Activated CD4-positive, alpha-beta memory T cell treated with anti-CD3 and anti-CD28 coated beads for 36 hours (primary cell): ENCODE measurements at regions of chr22 and their contacts with region 1.

Region 1: GRCh38 chr22:37566903-37567820 is 6.9 kb downstream of the CDC42EP1 start:
- DNase-seq: peak; percentile 96
- H3K4me3 Mint-ChIP-seq: peak overlapping the region; percentile 35
- H3K27ac Mint-ChIP-seq: peak overlapping the region; percentile 81
- H3K4me1 Mint-ChIP-seq: peaks cover 27% of the 10 kb centered on the region
- H3K27me3 Mint-ChIP-seq: peaks cover 24% of the 10 kb centered on the region

Region 2: DNA sequence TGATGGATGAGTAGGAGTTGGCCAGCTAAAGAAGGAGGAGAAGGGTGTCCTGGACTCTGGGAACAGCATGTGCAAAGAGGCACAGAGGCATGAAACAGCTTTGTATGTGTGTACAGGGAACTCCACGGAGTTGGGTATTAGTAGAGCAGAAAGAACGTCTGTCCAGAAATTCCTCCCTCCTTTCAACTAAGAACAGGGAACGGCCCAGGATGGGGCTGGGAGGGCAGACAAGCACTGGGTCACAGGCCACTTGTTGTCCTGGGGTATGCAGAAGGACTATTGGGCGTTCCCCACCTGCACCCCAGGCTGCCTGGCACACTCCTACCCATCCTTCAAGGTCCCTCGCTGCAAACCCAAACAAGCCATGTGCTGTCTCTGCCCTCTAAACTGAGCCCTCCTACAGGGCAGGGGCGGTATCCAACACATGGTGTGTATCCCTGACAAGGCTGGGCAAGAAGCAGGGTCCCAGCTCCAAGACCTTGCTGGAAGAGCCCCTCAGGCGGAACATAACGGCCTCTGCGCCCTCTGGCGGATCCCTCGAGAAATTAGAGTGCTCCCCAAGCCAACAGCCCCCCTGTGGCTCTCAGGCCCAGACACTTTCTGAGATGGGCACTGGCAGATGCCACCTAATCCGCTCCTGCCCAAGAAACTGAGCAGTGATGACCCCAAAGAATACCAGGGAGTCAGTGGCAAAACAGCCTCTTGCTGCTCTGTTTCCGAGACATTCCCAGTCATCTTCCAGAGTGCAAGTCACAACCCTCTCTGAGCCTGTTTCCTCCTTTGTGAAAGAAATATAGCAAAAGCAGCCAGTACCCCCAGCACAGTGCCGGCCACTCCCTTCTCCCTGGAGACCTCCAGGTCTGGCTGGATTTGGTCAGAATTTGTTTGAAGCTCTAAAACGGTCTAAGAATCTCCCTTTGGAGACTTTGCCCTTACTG is 138.2 kb before region 1 on chr22:
- CTCF ChIA-PET with region 1: interaction called, 18 read pairs
- POLR2A ChIA-PET with region 1: no interaction called
- intact Hi-C with region 1: no loop called
- DNase-seq: peak; percentile 66
- H3K4me3 Mint-ChIP-seq: no peak overlapping the region
- H3K27ac Mint-ChIP-seq: no peak overlapping the region
- H3K4me1 Mint-ChIP-seq: peaks cover 27% of the 10 kb centered on the region
- H3K27me3 Mint-ChIP-seq: peaks cover 55% of the 10 kb centered on the region

Region 3: DNA sequence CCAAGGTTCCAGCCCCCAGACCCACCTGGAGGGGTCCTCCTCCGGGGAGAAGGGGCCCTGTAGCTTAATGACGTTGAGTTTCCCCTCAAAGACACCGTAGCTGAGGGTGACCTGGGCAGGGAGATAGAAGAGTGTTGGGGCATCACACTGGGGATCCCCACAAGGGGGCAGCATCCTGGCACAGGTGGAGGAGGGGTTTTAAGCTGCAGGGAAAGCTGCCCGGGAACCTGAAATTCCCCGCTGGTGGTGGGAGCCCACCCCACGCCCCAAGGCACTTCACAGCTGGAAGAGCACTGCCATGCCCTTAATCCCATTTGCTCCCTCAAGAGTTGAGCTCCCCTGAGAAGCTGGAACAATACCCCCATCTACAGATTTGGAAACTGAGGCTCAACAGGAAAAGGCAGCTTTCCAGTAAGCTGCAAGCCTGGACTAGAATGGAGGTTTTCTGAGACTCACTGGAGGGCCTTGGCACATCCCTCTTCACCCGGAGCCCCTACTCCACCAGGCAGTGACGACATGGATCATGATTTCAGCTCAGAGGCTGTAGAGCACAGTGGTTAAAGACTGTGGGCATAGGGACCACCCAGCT is 94.7 kb before region 1 on chr22:
- CTCF ChIA-PET with region 1: interaction called, 45 read pairs
- POLR2A ChIA-PET with region 1: no interaction called
- intact Hi-C with region 1: no loop called
- DNase-seq: peak; percentile 52
- H3K4me3 Mint-ChIP-seq: no peak overlapping the region
- H3K27ac Mint-ChIP-seq: peak overlapping the region; percentile 49
- H3K4me1 Mint-ChIP-seq: no peaks in the 10 kb centered on the region
- H3K27me3 Mint-ChIP-seq: no peaks in the 10 kb centered on the region

Region 4: GRCh38 chr22:37525073-37525748 is 42.0 kb before region 1 on chr22:
- CTCF ChIA-PET with region 1: interaction called, 11 read pairs
- POLR2A ChIA-PET with region 1: interaction called, 3 read pairs
- intact Hi-C with region 1: no loop called
- DNase-seq: peak; percentile 49
- H3K4me3 Mint-ChIP-seq: no peak overlapping the region
- H3K27ac Mint-ChIP-seq: no peak overlapping the region
- H3K4me1 Mint-ChIP-seq: peaks cover 12% of the 10 kb centered on the region
- H3K27me3 Mint-ChIP-seq: peaks cover 29% of the 10 kb centered on the region

Region 5: DNA sequence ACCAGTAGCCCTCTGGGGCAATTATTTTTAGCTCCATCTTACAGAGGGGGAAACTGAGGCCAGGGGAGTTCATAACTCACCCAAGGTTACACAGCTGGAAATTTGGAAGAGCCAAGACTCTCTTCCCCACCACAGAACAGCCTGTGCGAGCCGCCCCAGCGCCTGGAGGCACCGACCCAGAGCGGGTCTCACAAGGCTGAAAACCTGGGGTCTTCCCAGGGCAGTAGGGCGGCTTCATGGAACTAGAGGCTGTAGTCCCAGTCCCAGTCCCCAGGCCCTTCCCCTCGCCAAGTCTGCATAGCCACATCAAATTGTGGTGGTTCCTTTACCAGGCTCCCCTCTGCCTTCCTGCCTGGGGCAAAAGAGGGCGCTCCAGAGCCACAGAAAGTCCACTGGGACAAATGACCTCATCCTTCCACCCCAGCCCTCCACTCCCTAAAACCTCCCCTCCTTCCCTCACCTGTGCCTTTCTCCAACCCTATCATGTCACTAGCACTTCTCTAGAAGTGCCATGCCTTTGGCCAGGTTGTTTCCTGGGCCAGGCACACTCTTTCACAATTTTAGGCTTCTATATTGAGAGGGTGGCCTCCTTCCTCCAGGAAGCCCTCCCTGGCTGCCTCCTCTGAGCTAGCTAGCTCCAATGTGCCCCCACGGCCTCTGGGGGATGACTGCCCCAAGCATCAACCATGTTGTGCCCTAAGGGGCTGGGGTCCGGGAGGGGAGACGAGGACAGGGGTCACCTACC is 22.0 kb before region 1 on chr22:
- CTCF ChIA-PET with region 1: interaction called, 612 read pairs
- POLR2A ChIA-PET with region 1: interaction called, 18 read pairs
- intact Hi-C with region 1: loop called (anchors 1 kb)
- DNase-seq: peak; percentile 83
- H3K4me3 Mint-ChIP-seq: no peak overlapping the region
- H3K27ac Mint-ChIP-seq: no peak overlapping the region
- H3K4me1 Mint-ChIP-seq: peaks cover 28% of the 10 kb centered on the region
- H3K27me3 Mint-ChIP-seq: peaks cover 12% of the 10 kb centered on the region

Region 6: DNA sequence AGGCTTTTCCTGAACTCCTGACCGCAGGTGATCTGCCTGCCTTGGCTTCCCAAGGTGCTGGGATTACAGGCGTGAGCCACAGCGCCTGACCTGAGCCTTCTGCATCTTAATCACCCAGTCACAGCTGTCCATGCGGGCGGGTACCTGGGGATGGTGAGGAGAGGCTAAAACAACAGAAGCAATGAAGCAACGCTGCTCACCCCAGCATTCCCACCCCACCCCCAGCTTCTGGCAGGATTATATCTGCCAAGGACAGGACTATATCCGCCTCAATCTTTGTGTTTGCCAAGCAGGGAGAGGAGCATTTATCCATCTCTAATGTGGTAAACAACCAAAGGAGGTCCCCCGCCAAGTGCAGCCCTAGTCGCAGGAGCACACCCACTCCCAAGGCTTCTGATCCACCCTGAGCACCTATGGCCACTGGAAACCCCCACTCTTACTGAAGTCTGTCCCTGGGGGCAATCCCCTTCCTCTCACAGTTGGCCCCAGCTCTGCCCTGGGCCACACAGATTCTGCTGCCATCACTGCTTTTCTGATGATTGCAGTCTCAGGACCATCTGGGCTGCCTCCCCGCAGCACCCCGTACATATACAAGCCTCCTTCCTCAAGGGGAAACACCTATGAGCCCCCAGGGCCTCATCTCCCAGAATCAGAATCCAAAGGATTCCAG is 21.5 kb after region 1 on chr22:
- CTCF ChIA-PET with region 1: interaction called, 83 read pairs
- POLR2A ChIA-PET with region 1: interaction called, 8 read pairs
- intact Hi-C with region 1: loop called (anchors 1 kb)
- DNase-seq: no peak
- H3K4me3 Mint-ChIP-seq: no peak overlapping the region
- H3K27ac Mint-ChIP-seq: no peak overlapping the region
- H3K4me1 Mint-ChIP-seq: peaks cover 10% of the 10 kb centered on the region
- H3K27me3 Mint-ChIP-seq: peaks cover 3% of the 10 kb centered on the region

Region 7: DNA sequence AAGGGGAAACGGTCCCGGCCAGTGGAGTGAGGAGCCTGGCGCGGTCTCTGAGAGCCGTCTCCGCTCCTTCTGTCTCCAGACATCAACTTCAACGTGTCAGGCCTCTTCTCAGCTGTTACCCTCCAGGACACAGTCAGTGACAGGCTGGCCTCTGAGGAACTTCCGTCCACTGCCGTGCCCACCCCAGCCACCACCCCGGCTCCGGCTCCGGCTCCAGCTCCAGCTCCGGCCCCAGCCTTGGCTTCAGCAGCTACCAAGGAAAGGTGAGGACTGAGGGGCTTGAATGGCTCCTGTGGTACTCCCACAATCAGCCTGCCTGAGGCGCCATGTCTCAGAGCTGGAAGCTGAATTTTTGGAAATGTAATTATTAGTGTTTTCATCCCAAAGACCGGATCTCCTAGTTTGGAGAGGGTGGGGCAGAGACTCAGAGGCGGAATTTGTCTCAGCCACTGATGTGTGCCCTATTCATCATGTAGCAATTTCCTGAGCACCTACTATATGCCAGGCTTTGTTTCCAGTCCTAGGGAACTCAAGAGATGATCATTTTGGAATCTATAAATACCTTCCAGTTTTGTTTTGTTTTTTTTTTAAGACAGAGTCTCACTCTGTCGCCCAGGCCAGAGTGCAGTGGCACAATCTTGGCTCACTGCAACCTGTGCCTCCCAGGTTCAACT is 83.4 kb after region 1 on chr22:
- CTCF ChIA-PET with region 1: no interaction called
- POLR2A ChIA-PET with region 1: no interaction called
- intact Hi-C with region 1: no loop called
- DNase-seq: no peak
- H3K4me3 Mint-ChIP-seq: no peak overlapping the region
- H3K27ac Mint-ChIP-seq: no peak overlapping the region
- H3K4me1 Mint-ChIP-seq: no peaks in the 10 kb centered on the region
- H3K27me3 Mint-ChIP-seq: no peaks in the 10 kb centered on the region